PC-9 (cell line): ENCODE measurements at regions of chr15 and their contacts with region 1.

Region 1: GRCh38 chr15:76190834-76191538 is 120.3 kb downstream of the ETFA start:
- DNase-seq: peak in 1 of 2 experiments; percentile 80
- H3K4me3 ChIP-seq: peak overlapping the region; percentile 45; the same call in 1 of the 2 replicates
- H3K27ac ChIP-seq: no peak overlapping the region
- H3K4me1 ChIP-seq: peaks cover 14% of the 10 kb centered on the region
- H3K27me3 ChIP-seq: no peaks in the 10 kb centered on the region
- CTCF ChIP-seq: peak; percentile 86

Region 2: DNA sequence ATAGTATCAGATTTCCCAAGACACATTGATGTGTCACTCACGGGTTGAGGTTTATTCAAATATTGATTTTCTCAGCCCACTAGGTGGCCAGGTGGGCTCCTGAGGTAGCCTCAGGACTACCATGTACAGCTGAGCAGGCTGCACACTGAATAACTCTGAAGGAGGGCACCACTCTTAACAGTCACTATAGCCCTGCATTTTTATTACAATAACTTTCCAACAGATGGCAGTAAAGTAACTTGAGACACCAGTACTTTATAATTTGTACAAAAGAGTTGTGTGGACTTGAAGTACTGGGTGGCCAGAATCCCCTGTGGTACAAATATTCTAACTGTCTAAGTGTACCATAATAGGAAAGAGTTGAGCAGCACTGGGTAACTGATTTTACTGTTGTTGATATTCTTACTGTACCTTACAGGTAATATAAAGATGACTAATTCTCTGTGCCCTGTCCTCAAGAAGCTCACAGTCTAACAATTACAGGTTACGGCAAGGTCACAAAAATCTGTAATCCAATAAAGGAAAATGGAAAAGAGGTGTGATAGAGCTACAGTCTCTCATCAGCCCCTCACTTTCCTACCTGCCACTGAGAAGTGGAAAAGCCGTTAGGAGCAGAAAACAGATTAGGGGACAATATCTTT is 44.3 kb after region 1 on chr15:
- CTCF ChIA-PET with region 1: interaction called, 3 read pairs
- POLR2A ChIA-PET with region 1: no interaction called
- intact Hi-C with region 1: loop called (anchors 5 kb)
- DNase-seq: no peak
- H3K4me3 ChIP-seq: no peak overlapping the region
- H3K27ac ChIP-seq: no peak overlapping the region
- H3K4me1 ChIP-seq: no peaks in the 10 kb centered on the region
- H3K27me3 ChIP-seq: no peaks in the 10 kb centered on the region
- CTCF ChIP-seq: peak; percentile 68

Region 3: DNA sequence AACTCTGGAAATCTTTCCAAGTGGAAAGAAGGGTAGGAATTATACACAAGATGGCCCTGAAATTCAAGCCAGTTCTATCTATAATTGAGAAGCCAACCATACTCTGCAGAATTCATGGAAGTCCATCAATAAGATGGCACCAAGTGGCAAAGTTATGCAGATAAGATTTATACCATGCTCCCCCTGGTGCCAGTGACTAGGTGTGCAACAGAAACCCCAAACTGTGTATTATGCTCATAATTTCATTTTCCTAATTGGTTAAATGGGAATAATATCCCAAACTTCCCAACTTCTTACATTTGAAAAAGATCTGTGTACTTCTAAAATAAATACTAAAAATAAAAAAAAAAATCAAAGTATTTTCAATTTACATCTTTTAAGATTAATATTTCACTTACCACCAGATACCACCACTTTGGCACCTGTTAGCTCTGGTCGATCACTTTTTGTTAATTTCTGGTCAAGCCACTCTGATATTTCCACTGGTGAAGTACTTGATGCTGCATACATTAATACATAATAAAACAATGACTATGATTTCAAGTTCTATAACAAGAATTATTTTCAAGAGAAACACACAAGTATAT is 94.3 kb after region 1 on chr15:
- CTCF ChIA-PET with region 1: no interaction called
- POLR2A ChIA-PET with region 1: no interaction called
- intact Hi-C with region 1: loop called (anchors 1 kb)
- DNase-seq: no peak
- H3K4me3 ChIP-seq: no peak overlapping the region
- H3K27ac ChIP-seq: no peak overlapping the region
- H3K4me1 ChIP-seq: no peaks in the 10 kb centered on the region
- H3K27me3 ChIP-seq: no peaks in the 10 kb centered on the region
- CTCF ChIP-seq: peak; percentile 65

Region 4: GRCh38 chr15:76336254-76337058 is 145.5 kb after region 1 on chr15 and contains the start of gene ISL2:
- CTCF ChIA-PET with region 1: no interaction called
- POLR2A ChIA-PET with region 1: no interaction called
- intact Hi-C with region 1: loop called (anchors 2 kb)
- DNase-seq: no peak
- H3K4me3 ChIP-seq: no peak within 1 kb of the TSS
- H3K27ac ChIP-seq: no peak within 1 kb of the TSS
- H3K4me1 ChIP-seq: no peaks in the 10 kb centered on the region
- H3K27me3 ChIP-seq: no peaks in the 10 kb centered on the region
- CTCF ChIP-seq: no peak
- total RNA-seq, gene ISL2: 0.24 and 0.63 TPM in 2 replicates

Region 5: DNA sequence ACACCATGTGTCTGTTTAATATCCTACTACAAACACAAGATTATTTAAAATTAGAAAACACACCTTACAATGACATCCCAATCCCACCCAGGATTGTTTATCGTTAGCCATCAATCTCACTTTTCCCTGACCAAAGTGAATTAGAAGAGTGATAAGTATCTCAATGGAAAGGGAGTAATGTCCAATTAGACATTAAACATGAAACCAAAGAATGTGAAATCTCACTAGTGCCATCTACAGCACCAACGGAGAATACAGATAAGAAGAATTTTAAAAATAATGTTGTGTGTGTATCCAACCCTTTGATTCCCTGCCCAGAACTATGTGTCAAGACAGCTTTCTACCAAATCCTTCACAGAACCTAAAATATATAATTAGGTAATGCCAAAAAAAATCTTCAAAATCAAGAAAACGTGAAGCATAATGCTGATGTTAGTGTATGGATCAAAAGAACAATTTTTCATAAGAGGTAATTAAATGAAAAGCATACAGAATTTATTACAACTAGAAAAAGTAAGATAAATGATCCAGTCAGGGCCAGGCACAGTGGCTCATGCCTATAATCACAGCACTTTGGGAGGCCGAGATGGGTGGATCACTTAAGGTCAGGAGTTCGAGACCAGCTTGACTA is 650.0 kb after region 1 on chr15:
- CTCF ChIA-PET with region 1: no interaction called
- POLR2A ChIA-PET with region 1: no interaction called
- intact Hi-C with region 1: loop called (anchors 5 kb)
- DNase-seq: no peak
- H3K4me3 ChIP-seq: no peak overlapping the region
- H3K27ac ChIP-seq: no peak overlapping the region
- H3K4me1 ChIP-seq: no peaks in the 10 kb centered on the region
- H3K27me3 ChIP-seq: no peaks in the 10 kb centered on the region
- CTCF ChIP-seq: peak; percentile 73

Region 6: GRCh38 chr15:76866716-76867321 is 675.8 kb after region 1 on chr15:
- CTCF ChIA-PET with region 1: interaction called, 3 read pairs
- POLR2A ChIA-PET with region 1: no interaction called
- intact Hi-C with region 1: loop called (anchors 2 kb)
- DNase-seq: peak; percentile 2 to 37
- H3K4me3 ChIP-seq: no peak overlapping the region
- H3K27ac ChIP-seq: no peak overlapping the region
- H3K4me1 ChIP-seq: no peaks in the 10 kb centered on the region
- H3K27me3 ChIP-seq: no peaks in the 10 kb centered on the region
- CTCF ChIP-seq: peak; percentile 75